Activated CD8-positive, alpha-beta T cell treated with anti-CD3 and anti-CD28 coated beads, Interleukin-2, amount 10 ng/mL, durations not matched to agents 7 days and 5 days (primary cell): ENCODE measurements at regions of chr5 and their contacts with region 1.

Region 1: GRCh38 chr5:110738812-110739651 is at the start of gene SLC25A46:
- DNase-seq: peak; percentile 93
- ATAC-seq: peak; percentile 85
- H3K4me3 Mint-ChIP-seq: peak within 1 kb of the TSS; percentile 90
- H3K27ac Mint-ChIP-seq: peak within 1 kb of the TSS; percentile 94
- H3K4me1 Mint-ChIP-seq: peaks cover 28% of the 10 kb centered on the region
- H3K27me3 Mint-ChIP-seq: peaks cover 15% of the 10 kb centered on the region
- total RNA-seq, gene SLC25A46: 41.1 to 47.3 TPM

Region 2: GRCh38 chr5:110751902-110752762 is 13.1 kb after region 1 on chr5:
- CTCF ChIA-PET with region 1: interaction called, 13 read pairs
- POLR2A ChIA-PET with region 1: interaction called, 47 read pairs
- DNase-seq: peak; percentile 68
- ATAC-seq: peak; percentile 90
- H3K4me3 Mint-ChIP-seq: peak overlapping the region; percentile 49
- H3K27ac Mint-ChIP-seq: peak overlapping the region; percentile 76
- H3K4me1 Mint-ChIP-seq: peaks cover 44% of the 10 kb centered on the region
- H3K27me3 Mint-ChIP-seq: no peaks in the 10 kb centered on the region

Region 3: GRCh38 chr5:110757118-110757729 is 18.2 kb after region 1 on chr5:
- CTCF ChIA-PET with region 1: interaction called, 13 read pairs
- POLR2A ChIA-PET with region 1: interaction called, 47 read pairs
- DNase-seq: peak; percentile 47
- ATAC-seq: no peak
- H3K4me3 Mint-ChIP-seq: no peak overlapping the region
- H3K27ac Mint-ChIP-seq: no peak overlapping the region
- H3K4me1 Mint-ChIP-seq: peaks cover 26% of the 10 kb centered on the region
- H3K27me3 Mint-ChIP-seq: no peaks in the 10 kb centered on the region